ENCODE measurements at regions of chr6 and their contacts with region 1.

Region 1: GRCh38 chr6:85642774-85643536 is at the start of gene SYNCRIP:
- DNase-seq: peak; percentile 98 to 99
- H3K4me3 ChIP-seq: peak within 1 kb of the TSS; percentile 97 to 98 (median 98)
- H3K27ac ChIP-seq: peak within 1 kb of the TSS; percentile 98 to 99
- H3K4me1 ChIP-seq: no peaks in the 10 kb centered on the region
- H3K27me3 ChIP-seq: no peaks in the 10 kb centered on the region
- CTCF ChIP-seq: peak in 1 of 3 donors; percentile 16
- POLR2A ChIP-seq: peak; percentile 98
- total RNA-seq, gene SYNCRIP: 56.0 to 77.9 (median 67.8) TPM

Region 2: GRCh38 chr6:85678602-85679444 is 35.9 kb after region 1 on chr6:
- intact Hi-C with region 1: loop called (anchors 5 kb)
- DNase-seq: peak; percentile 98 to 99
- H3K4me3 ChIP-seq: peak overlapping the region; percentile 80 to 98 (median 89)
- H3K27ac ChIP-seq: peak overlapping the region; percentile 88 to 91
- H3K4me1 ChIP-seq: peaks cover 3 to 12% of the 10 kb centered on the region in 2 donors
- H3K27me3 ChIP-seq: no peaks in the 10 kb centered on the region
- CTCF ChIP-seq: peak in 1 of 3 donors; percentile 3
- POLR2A ChIP-seq: peak; percentile 99

Measured in breast epithelium (tissue), 4 donors.